ENCODE measurements at regions of chr18 and their contacts with region 1.

Region 1: DNA sequence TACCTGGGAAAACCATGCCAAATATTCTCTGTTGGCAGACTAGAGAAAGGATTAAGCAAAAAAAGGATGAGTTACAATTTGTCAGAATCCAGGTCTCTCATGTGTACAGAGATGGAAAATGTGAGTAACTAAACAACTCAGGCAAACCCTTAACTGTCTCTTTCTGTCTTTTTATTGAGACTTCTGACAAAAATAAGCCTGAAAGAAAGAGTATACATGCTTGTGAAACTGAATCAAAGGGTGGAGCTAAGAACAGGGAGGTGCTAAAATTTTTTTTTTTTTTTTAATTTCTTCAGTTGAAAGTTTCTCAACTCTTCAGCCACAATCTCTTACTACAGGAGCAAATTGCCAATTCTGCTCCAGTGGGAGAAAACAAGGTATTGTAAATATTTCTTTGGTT is at the start of gene SERPINB10:
- DNase-seq: peak; percentile 34
- CTCF ChIP-seq: no peak

Region 2: DNA sequence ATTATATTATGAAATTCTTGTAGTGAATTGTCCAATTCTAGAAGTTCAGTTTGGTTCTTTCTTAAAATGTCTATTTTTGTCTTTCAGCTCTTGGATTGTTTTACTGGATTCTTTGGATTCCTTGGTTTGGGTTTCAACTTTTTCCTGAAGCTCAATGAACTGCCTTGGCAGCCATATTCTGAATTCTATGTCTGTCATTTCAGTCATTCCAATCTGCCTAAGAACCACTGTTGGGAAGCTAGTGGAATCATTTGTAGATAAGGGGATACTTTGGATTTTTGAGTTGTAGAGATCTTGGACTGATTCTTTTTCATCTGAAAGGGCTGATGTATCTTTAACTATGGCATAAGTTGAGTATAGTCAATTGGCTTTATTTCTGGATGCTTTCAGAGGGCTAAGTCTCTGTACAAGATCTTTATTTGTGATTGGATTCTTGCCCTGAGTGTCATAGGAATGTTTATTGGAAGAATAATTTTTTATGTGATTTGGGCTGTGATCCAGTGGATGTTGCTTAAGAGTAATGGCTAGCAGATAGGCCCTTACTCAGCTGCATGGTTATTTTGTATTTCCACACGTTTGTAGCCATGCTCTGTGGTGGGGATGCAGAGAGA is 90.1 kb before region 1 on chr18:
- CTCF ChIA-PET with region 1: no interaction called
- POLR2A ChIA-PET with region 1: no interaction called
- DNase-seq: no peak
- CTCF ChIP-seq: no peak

Region 3: DNA sequence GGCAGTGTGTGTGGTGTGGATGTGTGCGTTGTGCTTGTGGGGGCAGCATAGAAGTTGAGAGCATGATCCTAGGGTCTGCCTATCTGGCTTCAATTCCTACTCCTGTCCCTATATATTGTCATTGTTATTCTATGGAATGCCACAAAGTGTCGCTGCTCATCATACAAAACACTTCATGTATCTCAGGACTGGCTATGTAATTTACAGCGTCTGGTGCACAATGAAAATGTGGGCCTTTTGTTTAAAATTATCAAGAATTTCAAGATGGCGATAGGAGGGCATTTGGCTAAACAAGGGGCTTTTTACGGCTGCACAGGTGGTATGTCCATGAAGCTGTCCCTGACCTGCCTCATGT is 16.7 kb before region 1 on chr18:
- CTCF ChIA-PET with region 1: interaction called, 24 read pairs
- POLR2A ChIA-PET with region 1: no interaction called
- DNase-seq: peak; percentile 48
- CTCF ChIP-seq: peak; percentile 54

Region 4: GRCh38 chr18:63897072-63897471 is 10.6 kb before region 1 on chr18:
- CTCF ChIA-PET with region 1: interaction called, 24 read pairs
- POLR2A ChIA-PET with region 1: no interaction called
- DNase-seq: no peak
- CTCF ChIP-seq: no peak

Region 5: GRCh38 chr18:63924551-63924950 is 16.9 kb after region 1 on chr18:
- CTCF ChIA-PET with region 1: interaction called, 13 read pairs
- POLR2A ChIA-PET with region 1: interaction called, 8 read pairs
- DNase-seq: no peak
- CTCF ChIP-seq: no peak

Region 6: GRCh38 chr18:64017870-64018269 is 110.2 kb after region 1 on chr18:
- CTCF ChIA-PET with region 1: no interaction called
- POLR2A ChIA-PET with region 1: no interaction called
- DNase-seq: no peak
- CTCF ChIP-seq: peak; percentile 44

Region 7: DNA sequence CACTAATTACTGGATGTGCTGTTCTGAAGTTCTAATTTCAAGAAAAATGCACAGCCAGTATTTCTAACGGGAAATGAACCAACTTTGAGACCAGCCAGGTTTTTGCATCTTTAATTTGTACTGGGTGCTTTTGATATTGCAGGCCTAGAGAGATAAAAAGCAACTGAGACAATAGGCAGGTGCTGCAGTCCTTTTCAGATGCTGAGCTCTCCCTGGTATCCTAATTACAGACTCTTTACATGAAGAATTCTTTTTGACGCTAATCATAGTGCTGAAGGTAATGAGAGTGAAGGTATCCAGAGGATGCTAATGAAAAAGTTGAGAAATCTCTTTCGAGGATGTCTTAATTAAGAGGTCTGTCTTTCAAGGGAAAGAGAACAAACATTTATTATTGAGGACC is 147.4 kb after region 1 on chr18:
- CTCF ChIA-PET with region 1: no interaction called
- POLR2A ChIA-PET with region 1: no interaction called
- DNase-seq: no peak
- CTCF ChIP-seq: no peak

Region 8: DNA sequence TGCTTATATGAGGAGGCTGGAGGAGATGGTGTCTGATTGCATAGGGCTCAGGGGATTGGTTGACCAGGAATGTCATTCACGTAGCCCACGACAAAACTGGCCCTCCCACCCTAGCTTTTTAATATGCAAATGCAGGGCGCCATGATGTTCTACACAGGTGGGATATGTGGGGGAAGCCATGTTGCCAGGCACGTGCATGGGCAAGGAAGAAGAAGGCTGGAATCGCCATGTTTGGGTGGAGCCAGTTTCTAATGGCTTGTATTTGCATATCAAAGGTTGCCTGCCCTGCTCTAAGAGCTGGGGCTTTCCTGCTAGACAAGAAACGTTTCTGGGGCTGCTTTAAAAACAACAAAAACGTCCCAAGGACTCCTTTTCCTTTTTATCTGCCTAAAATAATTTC is 267.8 kb after region 1 on chr18:
- CTCF ChIA-PET with region 1: no interaction called
- POLR2A ChIA-PET with region 1: no interaction called
- DNase-seq: no peak
- CTCF ChIP-seq: no peak